ENCODE measurements at regions of chr4 and their contacts with region 1.

Region 1: DNA sequence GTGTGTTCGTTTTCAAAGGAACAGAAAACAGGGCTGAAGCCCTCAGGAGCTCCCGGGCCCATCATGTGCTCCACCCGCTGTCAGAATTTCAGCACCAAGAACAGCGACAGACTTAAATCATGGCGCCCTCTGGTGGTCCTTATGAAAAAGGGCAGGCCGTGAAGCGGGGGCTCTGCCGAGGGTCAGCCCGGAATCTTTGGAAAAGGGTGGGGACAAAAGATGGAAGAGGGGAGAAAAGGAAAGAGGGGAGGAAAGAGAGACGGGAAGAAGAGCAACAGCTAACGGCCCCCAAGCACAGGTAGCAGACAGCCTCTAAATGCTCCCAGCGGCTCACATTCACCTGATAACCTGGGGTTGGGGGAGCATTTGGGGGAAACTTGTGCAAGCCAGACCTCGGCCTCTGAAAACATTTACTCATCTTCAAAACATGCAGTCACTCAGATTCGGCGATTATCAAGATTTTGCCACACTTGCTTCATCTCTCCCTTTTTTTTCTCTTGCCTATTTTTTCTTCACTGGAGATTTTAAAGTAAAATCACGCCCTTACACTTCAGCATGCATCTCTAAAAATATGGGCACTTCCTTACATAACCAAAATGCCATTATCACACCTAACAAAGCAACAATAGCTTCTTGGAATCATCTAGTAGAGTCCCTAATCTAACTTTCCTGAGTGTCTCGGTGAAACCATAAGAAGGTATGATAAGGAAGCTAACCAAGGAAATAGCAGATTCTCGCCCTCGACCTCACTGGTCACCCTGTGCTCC is 28.1 kb upstream of the MAN2B2 start:
- DNase-seq: peak; percentile 75
- H3K4me3 Mint-ChIP-seq: no peak overlapping the region
- H3K27ac Mint-ChIP-seq: no peak overlapping the region
- H3K4me1 Mint-ChIP-seq: no peaks in the 10 kb centered on the region
- H3K27me3 Mint-ChIP-seq: peaks cover 29% of the 10 kb centered on the region
- CTCF ChIP-seq: peak; percentile 95

Region 2: DNA sequence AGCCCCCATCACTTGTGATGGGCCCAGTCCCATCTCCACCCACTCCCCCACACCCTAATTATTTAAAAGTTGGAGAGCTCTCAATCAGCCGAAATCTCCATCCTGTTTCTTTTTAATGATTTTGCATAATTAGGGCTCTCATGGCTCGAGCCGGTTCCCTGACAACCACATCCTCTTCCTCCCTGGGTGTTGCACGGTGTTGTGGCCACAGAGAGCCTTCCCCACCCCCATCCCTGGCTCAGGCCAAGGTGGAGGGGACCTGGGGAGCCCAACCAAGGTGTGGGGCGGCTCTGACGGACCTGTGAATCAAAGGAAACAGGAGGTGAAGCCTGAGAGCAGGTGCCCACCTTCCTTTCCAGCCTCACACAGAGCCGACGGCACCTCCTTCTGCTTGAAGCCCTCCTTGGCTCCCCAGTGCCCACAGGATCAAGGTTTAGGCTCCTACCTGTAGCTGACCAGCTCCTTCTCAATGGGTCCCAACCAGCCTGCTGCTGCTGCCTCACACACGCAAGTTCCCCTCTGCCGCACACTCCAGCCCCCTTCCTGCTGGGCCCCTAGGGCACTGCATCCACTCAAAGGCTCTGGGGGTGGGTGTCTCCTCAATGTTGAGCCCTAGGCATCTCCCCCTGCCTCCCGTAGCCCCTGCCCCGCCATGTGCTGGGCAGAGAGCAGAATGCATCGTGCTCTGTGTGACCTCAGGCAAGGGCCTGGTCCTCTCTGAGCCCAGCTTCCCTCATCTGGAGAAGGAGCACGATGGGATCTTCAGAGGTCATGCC is 208.5 kb before region 1 on chr4:
- CTCF ChIA-PET with region 1: interaction called, 54 read pairs
- POLR2A ChIA-PET with region 1: no interaction called
- intact Hi-C with region 1: no loop called
- DNase-seq: no peak
- H3K4me3 Mint-ChIP-seq: no peak overlapping the region
- H3K27ac Mint-ChIP-seq: no peak overlapping the region
- H3K4me1 Mint-ChIP-seq: no peaks in the 10 kb centered on the region
- H3K27me3 Mint-ChIP-seq: peaks cover 11% of the 10 kb centered on the region
- CTCF ChIP-seq: no peak

Region 3: DNA sequence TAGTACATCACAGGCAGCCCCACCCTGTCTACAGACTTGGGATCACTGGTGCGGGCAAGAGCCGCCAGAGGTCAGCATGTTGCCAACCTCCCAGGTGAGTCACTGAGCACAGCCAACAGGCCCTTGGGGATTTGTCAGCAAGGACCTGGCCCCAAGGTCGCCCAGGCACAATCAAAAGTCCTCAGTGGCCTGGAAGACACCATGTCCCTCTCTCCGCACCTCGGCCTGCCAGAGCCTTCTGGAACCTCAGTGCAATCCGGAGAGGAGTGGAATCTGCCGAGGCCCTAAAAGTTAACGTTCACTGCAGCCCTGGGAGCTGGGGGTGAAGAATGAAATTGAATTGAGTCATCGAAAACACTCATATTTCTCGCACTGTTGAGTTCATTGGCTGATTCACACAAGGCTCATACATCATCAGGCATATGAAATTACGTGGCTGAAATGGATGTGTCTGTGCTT is 202.9 kb before region 1 on chr4:
- CTCF ChIA-PET with region 1: interaction called, 53 read pairs
- POLR2A ChIA-PET with region 1: no interaction called
- intact Hi-C with region 1: loop called (anchors 1 kb)
- DNase-seq: peak; percentile 84
- H3K4me3 Mint-ChIP-seq: peak overlapping the region; percentile 19
- H3K27ac Mint-ChIP-seq: peak overlapping the region; percentile 39
- H3K4me1 Mint-ChIP-seq: peaks cover 8% of the 10 kb centered on the region
- H3K27me3 Mint-ChIP-seq: peaks cover 1% of the 10 kb centered on the region
- CTCF ChIP-seq: peak; percentile 43

Region 4: DNA sequence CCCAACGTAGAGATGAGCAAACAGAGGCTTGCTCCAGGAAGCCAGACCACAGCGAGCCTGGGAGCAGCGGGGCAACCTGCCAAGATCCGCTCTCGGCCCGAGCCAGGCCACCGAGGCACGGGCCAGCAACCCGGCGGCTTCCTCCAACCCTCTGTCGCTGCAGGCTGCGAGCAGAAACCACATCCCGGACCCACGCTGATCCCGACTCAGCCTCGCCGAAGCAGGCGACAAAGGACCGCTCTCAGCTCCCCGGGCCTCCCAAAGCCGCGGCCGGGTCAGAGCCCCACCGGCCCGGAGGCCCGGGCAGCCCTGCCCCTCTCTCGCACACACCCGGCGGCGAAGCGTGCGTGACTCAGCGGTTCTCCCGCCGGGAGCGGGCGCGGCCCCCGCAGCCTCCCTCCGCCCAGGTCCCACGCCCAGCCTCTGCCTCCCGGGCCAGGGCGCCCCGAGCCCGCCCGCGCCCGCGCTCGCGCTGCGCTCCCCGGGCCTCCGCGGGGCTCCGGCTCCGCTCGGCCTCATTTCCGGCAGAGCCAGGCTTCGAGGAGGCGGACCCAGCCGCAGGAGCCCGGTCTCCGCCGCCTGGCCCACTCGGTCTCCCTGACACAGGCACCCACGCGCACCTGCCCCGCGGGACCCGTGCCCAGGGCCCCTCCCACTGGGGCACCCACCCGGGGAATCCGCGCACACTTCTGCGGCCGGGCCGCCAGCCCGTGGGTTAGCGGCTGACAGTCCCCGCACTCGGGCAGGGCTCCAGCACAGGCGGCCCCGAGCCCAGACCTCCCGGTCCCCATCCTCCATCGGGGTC is 76.2 kb before region 1 on chr4:
- CTCF ChIA-PET with region 1: interaction called, 5 read pairs
- POLR2A ChIA-PET with region 1: no interaction called
- intact Hi-C with region 1: loop called (anchors 5 kb)
- DNase-seq: peak; percentile 59
- H3K4me3 Mint-ChIP-seq: peak overlapping the region; percentile 57
- H3K27ac Mint-ChIP-seq: no peak overlapping the region
- H3K4me1 Mint-ChIP-seq: no peaks in the 10 kb centered on the region
- H3K27me3 Mint-ChIP-seq: peaks cover 12% of the 10 kb centered on the region
- CTCF ChIP-seq: no peak

Region 5: GRCh38 chr4:6562931-6563901 is 16.4 kb after region 1 on chr4:
- CTCF ChIA-PET with region 1: interaction called, 10 read pairs
- POLR2A ChIA-PET with region 1: no interaction called
- intact Hi-C with region 1: no loop called
- DNase-seq: no peak
- H3K4me3 Mint-ChIP-seq: peak overlapping the region; percentile 23
- H3K27ac Mint-ChIP-seq: no peak overlapping the region
- H3K4me1 Mint-ChIP-seq: no peaks in the 10 kb centered on the region
- H3K27me3 Mint-ChIP-seq: peaks cover 39% of the 10 kb centered on the region
- CTCF ChIP-seq: no peak

Region 6: GRCh38 chr4:6668381-6668780 is 121.5 kb after region 1 on chr4:
- CTCF ChIA-PET with region 1: no interaction called
- POLR2A ChIA-PET with region 1: no interaction called
- intact Hi-C with region 1: loop called (anchors 10 kb)
- DNase-seq: peak; percentile 47
- H3K4me3 Mint-ChIP-seq: no peak overlapping the region
- H3K27ac Mint-ChIP-seq: no peak overlapping the region
- H3K4me1 Mint-ChIP-seq: no peaks in the 10 kb centered on the region
- H3K27me3 Mint-ChIP-seq: no peaks in the 10 kb centered on the region
- CTCF ChIP-seq: no peak